ENCODE measurements at regions of chr1 and their contacts with region 1.

Region 1: GRCh38 chr1:95043141-95043980 is 29.4 kb downstream of the ALG14 start:
- DNase-seq: peak; percentile 87
- H3K4me3 Mint-ChIP-seq: no peak overlapping the region
- H3K27ac Mint-ChIP-seq: no peak overlapping the region
- H3K4me1 Mint-ChIP-seq: no peaks in the 10 kb centered on the region
- H3K27me3 Mint-ChIP-seq: no peaks in the 10 kb centered on the region

Region 2: GRCh38 chr1:94481473-94481933 is 561.9 kb before region 1 on chr1:
- CTCF ChIA-PET with region 1: no interaction called
- intact Hi-C with region 1: loop called (anchors 2 kb)
- DNase-seq: peak; percentile 44
- H3K4me3 Mint-ChIP-seq: no peak overlapping the region
- H3K27ac Mint-ChIP-seq: no peak overlapping the region
- H3K4me1 Mint-ChIP-seq: no peaks in the 10 kb centered on the region
- H3K27me3 Mint-ChIP-seq: no peaks in the 10 kb centered on the region

Region 3: GRCh38 chr1:94819941-94820746 is 223.2 kb before region 1 on chr1 and contains the start of gene SLC44A3:
- CTCF ChIA-PET with region 1: no interaction called
- intact Hi-C with region 1: loop called (anchors 1 kb)
- DNase-seq: peak; percentile 6
- H3K4me3 Mint-ChIP-seq: peak within 1 kb of the TSS; percentile 57
- H3K27ac Mint-ChIP-seq: no peak within 1 kb of the TSS
- H3K4me1 Mint-ChIP-seq: peaks cover 2% of the 10 kb centered on the region
- H3K27me3 Mint-ChIP-seq: peaks cover 29% of the 10 kb centered on the region
- total RNA-seq, gene SLC44A3: not detected

Region 4: GRCh38 chr1:94854458-94855306 is 188.7 kb before region 1 on chr1:
- CTCF ChIA-PET with region 1: interaction called, 118 read pairs
- intact Hi-C with region 1: loop called (anchors 1 kb)
- DNase-seq: peak; percentile 91
- H3K4me3 Mint-ChIP-seq: no peak overlapping the region
- H3K27ac Mint-ChIP-seq: no peak overlapping the region
- H3K4me1 Mint-ChIP-seq: no peaks in the 10 kb centered on the region
- H3K27me3 Mint-ChIP-seq: peaks cover 3% of the 10 kb centered on the region

Region 5: DNA sequence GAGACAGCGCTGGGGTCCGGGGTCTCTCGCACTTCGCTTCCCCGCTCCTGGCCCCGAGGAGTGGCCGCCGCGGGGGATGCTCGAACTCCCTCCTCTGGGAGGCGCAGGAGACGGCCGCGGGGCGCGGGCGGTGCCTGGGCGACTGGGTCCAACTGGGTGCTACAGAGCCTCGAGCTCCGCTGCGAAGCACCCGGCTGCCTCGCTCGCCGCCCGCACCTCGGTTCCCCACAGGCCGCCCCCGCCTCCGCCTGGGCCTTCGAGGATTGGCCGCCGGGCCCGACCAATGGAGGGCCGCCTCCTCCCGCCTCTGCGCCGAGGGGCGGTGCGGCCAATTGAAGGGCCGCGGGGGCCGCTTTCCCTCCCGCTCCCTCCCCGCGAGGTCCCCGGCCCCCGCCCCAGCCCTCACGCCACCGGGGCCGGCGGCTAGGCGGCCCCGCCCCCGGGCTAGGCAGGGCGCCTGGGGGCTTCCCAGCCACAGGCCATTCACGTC is 116.4 kb before region 1 on chr1 and contains the start of gene CNN3:
- CTCF ChIA-PET with region 1: interaction called, 3 read pairs
- intact Hi-C with region 1: loop called (anchors 1 kb)
- DNase-seq: peak; percentile 77
- H3K4me3 Mint-ChIP-seq: peak within 1 kb of the TSS; percentile 85
- H3K27ac Mint-ChIP-seq: no peak within 1 kb of the TSS
- H3K4me1 Mint-ChIP-seq: peaks cover 21% of the 10 kb centered on the region
- H3K27me3 Mint-ChIP-seq: peaks cover 15% of the 10 kb centered on the region
- total RNA-seq, gene CNN3: 10.0 to 10.6 TPM

Region 6: DNA sequence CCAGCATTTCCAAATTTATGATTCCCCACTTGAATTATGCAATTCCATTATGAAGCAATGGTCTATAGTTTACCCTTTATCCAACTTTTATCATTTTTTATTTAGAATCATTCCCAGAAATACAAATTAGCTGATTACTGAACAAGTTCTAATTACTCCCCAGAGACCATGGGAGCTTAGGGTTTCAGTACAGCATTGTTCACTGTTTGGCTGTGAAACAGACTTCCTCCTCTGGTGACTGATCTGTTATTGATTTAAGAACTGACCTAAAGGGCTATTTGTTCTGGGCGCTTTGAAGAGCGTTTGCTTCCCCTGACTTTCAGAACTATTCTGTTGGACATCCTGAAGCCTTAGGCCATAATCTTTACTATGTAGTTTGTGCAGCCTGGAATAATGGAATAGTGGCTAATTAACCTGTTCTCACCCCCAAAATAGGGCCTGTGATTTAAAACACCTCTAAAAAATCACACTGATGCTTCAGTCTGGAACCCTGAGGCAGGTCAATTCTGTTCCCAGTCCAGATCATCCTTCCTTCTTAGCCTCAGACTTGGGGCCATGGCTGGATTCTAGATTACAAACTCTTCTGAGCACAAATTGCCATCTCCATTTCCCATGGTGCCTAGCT is 29.3 kb before region 1 on chr1:
- CTCF ChIA-PET with region 1: no interaction called
- intact Hi-C with region 1: no loop called
- DNase-seq: no peak
- H3K4me3 Mint-ChIP-seq: no peak overlapping the region
- H3K27ac Mint-ChIP-seq: no peak overlapping the region
- H3K4me1 Mint-ChIP-seq: no peaks in the 10 kb centered on the region
- H3K27me3 Mint-ChIP-seq: no peaks in the 10 kb centered on the region

Region 7: DNA sequence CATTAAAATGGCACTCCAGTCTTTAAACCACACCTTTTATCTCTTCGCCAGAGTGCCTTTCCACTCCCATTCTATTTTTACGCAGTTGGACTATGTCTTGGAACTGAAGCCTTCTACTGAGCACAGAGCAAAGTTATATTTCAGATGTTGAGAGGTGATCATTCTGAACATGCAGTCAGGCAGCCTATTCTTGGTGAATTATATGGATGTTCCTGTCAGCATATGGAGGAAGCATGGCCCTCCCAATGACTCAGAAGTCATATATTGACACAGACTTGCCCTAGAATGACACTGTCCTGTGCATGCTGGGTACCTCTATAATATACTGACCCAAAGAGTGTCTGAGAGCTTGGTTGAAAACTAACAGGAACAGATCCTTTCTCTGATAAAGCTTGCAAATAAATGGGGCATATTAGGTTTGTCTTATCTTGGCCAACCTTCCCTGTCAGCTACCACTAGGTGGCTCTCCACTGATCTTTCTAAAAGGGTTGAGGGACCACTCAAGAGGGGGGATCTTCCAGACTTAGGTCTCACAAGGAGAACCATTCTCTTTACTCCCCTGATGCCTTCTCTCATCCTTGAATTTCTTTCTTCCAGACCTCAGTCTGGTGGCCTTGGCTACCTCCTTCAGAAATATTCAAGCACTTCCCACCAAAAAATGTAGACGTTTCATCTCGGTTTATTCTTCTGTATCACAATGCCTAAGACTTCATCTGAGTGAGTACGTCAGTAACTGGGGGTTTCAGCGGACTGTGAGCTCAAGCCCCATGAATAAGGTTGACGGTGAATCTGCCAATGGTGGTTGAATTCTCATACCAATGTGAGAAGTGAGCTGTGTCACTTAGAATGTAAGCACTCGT is 41.2 kb after region 1 on chr1:
- CTCF ChIA-PET with region 1: no interaction called
- intact Hi-C with region 1: no loop called
- DNase-seq: peak; percentile 38
- H3K4me3 Mint-ChIP-seq: no peak overlapping the region
- H3K27ac Mint-ChIP-seq: no peak overlapping the region
- H3K4me1 Mint-ChIP-seq: no peaks in the 10 kb centered on the region
- H3K27me3 Mint-ChIP-seq: no peaks in the 10 kb centered on the region

Measured in activated naive CD4-positive, alpha-beta T cell treated with anti-CD3 and anti-CD28 coated beads for 36 hours (primary cell).